ENCODE measurements at regions of chr15 and their contacts with region 1.

Region 1: GRCh38 chr15:50354838-50355618 is at the start of gene GABPB1:
- DNase-seq: peak; percentile 59 to 90
- H3K4me3 ChIP-seq: peak within 1 kb of the TSS; percentile 86 to 95 (median 92)
- H3K27ac ChIP-seq: peak within 1 kb of the TSS; percentile 99
- H3K4me1 ChIP-seq: peaks cover 0 to 5% (median under 1%) of the 10 kb centered on the region in 4 experiments; a peak in 3 of 7 replicates
- H3K27me3 ChIP-seq: no peaks in the 10 kb centered on the region
- CTCF ChIP-seq: no peak
- EP300 ChIP-seq: no peak; a peak in 1 of 3 replicates
- POLR2A ChIP-seq: peak; percentile 86 to 97
- RAD21 ChIP-seq: no peak
- total RNA-seq, gene GABPB1: 32.3 and 34.3 TPM in 2 replicates

Region 2: GRCh38 chr15:50340416-50340815 is 14.6 kb before region 1 on chr15:
- CTCF ChIA-PET with region 1: interaction called, 4 read pairs
- POLR2A ChIA-PET with region 1: interaction called, 34 read pairs
- DNase-seq: no peak
- H3K4me3 ChIP-seq: no peak overlapping the region
- H3K27ac ChIP-seq: no peak overlapping the region
- H3K4me1 ChIP-seq: no peaks in the 10 kb centered on the region
- H3K27me3 ChIP-seq: no peaks in the 10 kb centered on the region
- CTCF ChIP-seq: no peak
- EP300 ChIP-seq: no peak
- POLR2A ChIP-seq: no peak
- RAD21 ChIP-seq: no peak

Region 3: DNA sequence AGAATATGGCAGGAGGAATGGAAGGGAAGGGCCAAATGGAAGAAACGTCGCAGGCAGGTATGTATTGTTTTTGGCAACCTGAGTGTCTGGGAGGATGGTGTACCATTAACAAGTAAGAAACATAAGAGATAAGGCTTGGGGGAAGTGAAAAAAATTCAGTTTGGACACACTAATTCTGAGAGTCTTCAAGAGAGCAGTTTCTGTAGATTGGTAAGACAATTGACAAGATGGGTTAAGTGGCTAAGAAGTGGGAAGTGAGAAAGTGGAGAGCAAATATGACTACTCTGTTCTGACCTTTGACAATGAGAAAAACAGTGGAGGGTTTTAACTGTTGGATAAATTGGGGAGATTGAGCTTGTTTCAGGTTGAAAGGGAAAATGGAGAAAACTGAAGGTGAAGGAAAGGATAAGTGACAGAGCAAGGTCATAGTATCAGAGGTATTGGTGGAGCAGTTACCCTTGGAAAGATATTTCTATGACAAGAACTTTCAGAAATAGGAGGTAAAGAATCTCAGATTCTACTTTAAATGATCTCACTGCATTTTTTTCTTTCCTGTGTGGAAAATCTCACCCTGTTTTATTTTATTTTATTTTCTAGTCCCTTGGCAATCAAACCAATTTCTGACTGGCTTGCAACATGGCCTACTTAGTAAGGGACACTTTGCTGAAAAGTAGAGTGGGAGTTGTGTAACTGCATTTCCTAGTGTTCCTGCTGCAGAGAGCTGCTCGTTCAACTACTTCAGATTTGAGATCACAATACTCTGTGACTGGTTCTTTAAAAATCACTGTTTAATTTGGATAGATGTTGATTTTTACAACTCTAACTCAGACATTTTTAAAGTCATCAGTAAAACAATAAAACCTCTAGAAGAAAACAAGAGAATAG is 23.1 kb after region 1 on chr15:
- CTCF ChIA-PET with region 1: no interaction called
- POLR2A ChIA-PET with region 1: interaction called, 11 read pairs
- DNase-seq: no peak
- H3K4me3 ChIP-seq: no peak overlapping the region
- H3K27ac ChIP-seq: no peak overlapping the region
- H3K4me1 ChIP-seq: no peaks in the 10 kb centered on the region
- H3K27me3 ChIP-seq: no peaks in the 10 kb centered on the region
- CTCF ChIP-seq: no peak
- EP300 ChIP-seq: no peak
- POLR2A ChIP-seq: no peak
- RAD21 ChIP-seq: no peak

Region 4: GRCh38 chr15:50424066-50424890 is 69.2 kb after region 1 on chr15 and contains the start of gene USP8:
- CTCF ChIA-PET with region 1: no interaction called
- POLR2A ChIA-PET with region 1: interaction called, 23 read pairs
- DNase-seq: peak; percentile 97 to 98
- H3K4me3 ChIP-seq: peak within 1 kb of the TSS; percentile 87 to 97 (median 96)
- H3K27ac ChIP-seq: peak within 1 kb of the TSS; percentile 85
- H3K4me1 ChIP-seq: peaks cover 0 to 4% (median 1%) of the 10 kb centered on the region in 4 experiments; a peak in 3 of 7 replicates
- H3K27me3 ChIP-seq: no peaks in the 10 kb centered on the region
- CTCF ChIP-seq: no peak
- EP300 ChIP-seq: no peak; a peak in 1 of 3 replicates
- POLR2A ChIP-seq: peak; percentile 98 to 99
- RAD21 ChIP-seq: no peak
- total RNA-seq, gene USP8: 57.5 and 66.2 TPM in 2 replicates

Measured in H1 (cell line).